Caco-2 (cell line): ENCODE measurements at regions of chr4 and their contacts with region 1.

Region 1: GRCh38 chr4:166042510-166043055 is 169.5 kb downstream of the TLL1 start:
- DNase-seq: peak in 1 of 2 experiments; percentile 7
- H3K4me3 ChIP-seq: no peak overlapping the region
- H3K4me3 Mint-ChIP-seq: peak overlapping the region; percentile 63
- H3K27ac Mint-ChIP-seq: peak overlapping the region; percentile 56
- H3K4me1 ChIP-seq: peaks cover 9% of the 10 kb centered on the region; the same call in 1 of the 2 replicates
- H3K4me1 Mint-ChIP-seq: peaks cover 19% of the 10 kb centered on the region
- H3K27me3 ChIP-seq: no peaks in the 10 kb centered on the region
- H3K27me3 Mint-ChIP-seq: no peaks in the 10 kb centered on the region
- CTCF ChIP-seq: no peak

Region 2: DNA sequence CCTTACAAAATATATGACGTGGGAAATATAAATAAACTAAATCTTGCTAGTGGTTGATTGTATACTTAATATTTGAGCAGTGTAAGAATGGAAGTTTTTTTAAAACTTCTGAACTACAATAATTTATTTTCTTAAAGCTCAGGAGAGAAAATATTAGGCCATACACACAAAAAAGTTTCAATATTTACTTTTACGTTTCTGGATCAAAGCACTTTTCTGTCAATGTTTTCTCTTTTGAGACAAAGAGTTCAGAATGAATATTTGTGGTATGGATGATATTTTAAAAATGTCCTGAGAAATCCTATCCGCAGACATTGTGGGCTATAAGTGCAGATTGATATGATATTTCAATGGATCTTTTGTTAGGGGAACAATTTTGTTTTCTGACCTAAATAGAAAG is 59.6 kb before region 1 on chr4:
- CTCF ChIA-PET with region 1: no interaction called
- POLR2A ChIA-PET with region 1: no interaction called
- intact Hi-C with region 1: loop called (anchors 1 kb)
- DNase-seq: no peak
- H3K4me3 ChIP-seq: no peak overlapping the region
- H3K4me3 Mint-ChIP-seq: no peak overlapping the region
- H3K27ac Mint-ChIP-seq: no peak overlapping the region
- H3K4me1 ChIP-seq: peaks cover 6% of the 10 kb centered on the region
- H3K4me1 Mint-ChIP-seq: no peaks in the 10 kb centered on the region
- H3K27me3 ChIP-seq: no peaks in the 10 kb centered on the region
- H3K27me3 Mint-ChIP-seq: no peaks in the 10 kb centered on the region
- CTCF ChIP-seq: no peak